GM12878 (cell line): ENCODE measurements at regions of chr18 and their contacts with region 1.

Region 1: DNA sequence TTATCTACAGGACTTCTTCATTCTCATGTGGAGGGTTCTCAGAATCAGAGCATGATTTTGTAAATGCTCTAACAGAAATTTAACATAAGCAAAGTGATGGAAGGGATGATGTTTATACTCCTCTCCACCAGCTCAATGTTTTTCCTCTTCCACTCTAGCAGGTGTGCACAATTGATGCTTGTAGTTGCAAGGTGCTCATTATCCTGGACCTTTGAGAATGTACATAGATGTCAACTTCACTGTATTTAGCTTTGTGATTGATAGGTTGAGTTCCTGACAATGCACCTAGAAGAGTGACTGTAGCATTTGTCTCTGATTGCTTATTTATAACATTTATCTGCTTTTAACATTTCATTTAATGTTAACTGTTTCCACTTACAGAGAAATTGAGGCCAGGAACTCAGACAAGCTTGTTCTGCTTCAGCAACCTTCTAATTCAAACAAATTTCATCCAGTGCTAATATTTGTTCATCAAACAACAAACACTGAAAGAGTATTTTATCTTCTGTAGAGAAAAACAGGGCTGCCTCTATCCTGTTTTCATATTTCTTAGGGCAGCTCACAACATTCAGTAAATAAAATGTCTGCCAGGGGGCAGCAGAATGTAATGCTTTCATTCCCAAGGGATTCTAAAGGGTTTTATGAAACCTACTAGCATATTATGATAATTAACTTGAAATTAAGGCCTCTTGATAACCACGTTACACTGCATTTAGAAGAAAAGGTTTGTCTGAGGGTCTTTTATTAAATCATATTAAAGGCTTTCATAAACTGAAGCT is 127.9 kb upstream of the NOL4 start:
- DNase-seq: no peak
- ATAC-seq: no peak
- H3K4me3 ChIP-seq: no peak overlapping the region
- H3K27ac ChIP-seq: no peak overlapping the region
- H3K4me1 ChIP-seq: no peaks in the 10 kb centered on the region
- H3K27me3 ChIP-seq: no peaks in the 10 kb centered on the region
- CTCF ChIP-seq: peak in 1 of 3 experiments; percentile 9; a peak in 1 of 6 replicates
- EP300 ChIP-seq: no peak
- POLR2A ChIP-seq: no peak
- RAD21 ChIP-seq: no peak

Region 2: DNA sequence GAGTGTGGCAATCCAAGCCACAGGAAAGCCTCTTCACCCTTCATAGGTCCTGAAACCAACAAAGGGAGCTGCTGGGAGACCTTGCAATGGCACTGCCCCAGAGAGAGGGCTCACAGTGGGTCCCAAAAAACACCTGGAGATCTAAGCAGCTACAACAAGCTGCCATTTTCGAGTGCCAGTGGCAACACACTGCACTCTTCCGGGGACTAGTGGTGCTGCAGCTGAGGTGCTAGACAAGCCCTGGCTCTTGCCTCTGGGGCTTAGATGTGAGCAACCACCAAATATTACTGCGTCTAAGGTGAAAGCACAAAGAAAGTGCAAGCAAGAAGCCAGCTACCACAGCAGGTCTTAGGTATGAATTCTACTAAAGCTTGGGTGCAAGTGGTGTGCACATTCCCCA is 320.8 kb before region 1 on chr18:
- CTCF ChIA-PET with region 1: no interaction called
- POLR2A ChIA-PET with region 1: no interaction called
- RAD21 ChIA-PET with region 1: no interaction called
- SMC1A ChIA-PET with region 1: no interaction called
- in situ Hi-C with region 1: no loop called
- intact Hi-C with region 1: no loop called
- DNase-seq: no peak
- ATAC-seq: peak; percentile 49
- H3K4me3 ChIP-seq: no peak overlapping the region
- H3K27ac ChIP-seq: no peak overlapping the region
- H3K4me1 ChIP-seq: no peaks in the 10 kb centered on the region
- H3K27me3 ChIP-seq: no peaks in the 10 kb centered on the region
- CTCF ChIP-seq: peak in 2 of 3 experiments; percentile 12 to 25; a peak in 2 of 6 replicates
- EP300 ChIP-seq: no peak
- POLR2A ChIP-seq: no peak
- RAD21 ChIP-seq: peak; percentile 34; the same call in 1 of the 2 replicates

Region 3: GRCh38 chr18:34212511-34212910 is 140.1 kb before region 1 on chr18:
- CTCF ChIA-PET with region 1: no interaction called
- POLR2A ChIA-PET with region 1: no interaction called
- RAD21 ChIA-PET with region 1: no interaction called
- SMC1A ChIA-PET with region 1: no interaction called
- in situ Hi-C with region 1: no loop called
- intact Hi-C with region 1: no loop called
- DNase-seq: no peak
- ATAC-seq: peak; percentile 51
- H3K4me3 ChIP-seq: no peak overlapping the region
- H3K27ac ChIP-seq: no peak overlapping the region
- H3K4me1 ChIP-seq: no peaks in the 10 kb centered on the region
- H3K27me3 ChIP-seq: no peaks in the 10 kb centered on the region
- CTCF ChIP-seq: no peak
- EP300 ChIP-seq: no peak
- POLR2A ChIP-seq: no peak
- RAD21 ChIP-seq: no peak

Region 4: GRCh38 chr18:34444622-34445021 is 92.0 kb after region 1 on chr18:
- CTCF ChIA-PET with region 1: interaction called, 10 read pairs
- POLR2A ChIA-PET with region 1: no interaction called
- RAD21 ChIA-PET with region 1: interaction called, 5 read pairs
- SMC1A ChIA-PET with region 1: interaction called, 4 read pairs
- in situ Hi-C with region 1: no loop called
- intact Hi-C with region 1: no loop called
- DNase-seq: no peak
- ATAC-seq: no peak
- H3K4me3 ChIP-seq: no peak overlapping the region
- H3K27ac ChIP-seq: no peak overlapping the region
- H3K4me1 ChIP-seq: no peaks in the 10 kb centered on the region
- H3K27me3 ChIP-seq: no peaks in the 10 kb centered on the region
- CTCF ChIP-seq: no peak
- EP300 ChIP-seq: no peak
- POLR2A ChIP-seq: no peak
- RAD21 ChIP-seq: no peak